A673 (cell line): ENCODE measurements at regions of chr11 and their contacts with region 1.

Region 1: DNA sequence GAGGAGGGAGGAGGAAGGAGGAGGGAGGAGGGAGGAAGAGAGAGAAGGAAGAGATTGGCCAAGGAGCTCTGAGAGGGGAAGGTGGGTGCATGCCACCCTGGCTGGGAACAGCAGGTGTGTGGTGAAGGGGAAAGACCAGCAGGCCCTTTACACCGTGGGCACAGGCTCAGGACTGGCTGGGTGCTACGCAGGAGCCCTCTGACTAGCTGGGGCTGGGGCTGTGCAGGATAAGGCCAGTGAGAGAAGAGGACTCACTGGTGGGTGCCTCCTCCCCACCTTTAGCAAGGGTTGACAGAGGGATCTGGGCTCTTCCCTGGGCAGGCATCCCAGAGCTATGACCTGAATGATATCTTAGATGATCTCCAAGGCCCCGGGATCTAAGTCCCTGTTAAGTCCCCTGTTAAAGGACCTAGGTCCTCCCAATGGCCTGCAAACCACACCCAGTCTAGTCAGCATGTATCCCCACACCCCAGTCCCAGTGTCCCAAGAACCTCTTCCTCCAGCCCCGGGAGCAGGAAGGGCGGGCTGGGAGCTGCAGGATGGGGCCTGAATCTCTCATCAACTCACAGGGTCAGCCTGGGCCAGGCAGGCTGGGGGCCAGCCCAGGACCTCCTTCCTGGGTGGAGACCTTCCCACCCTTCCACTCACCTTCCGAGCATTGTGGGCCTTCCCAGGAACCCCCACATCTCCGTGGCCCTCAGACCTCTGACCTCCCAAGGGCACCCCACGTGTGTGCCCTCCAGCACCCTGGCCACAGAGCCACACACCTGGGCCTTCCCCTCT is 55.4 kb downstream of the CDKN1C start:
- DNase-seq: no peak
- H3K4me3 ChIP-seq: no peak overlapping the region
- H3K27ac ChIP-seq: no peak overlapping the region
- H3K4me1 ChIP-seq: no peaks in the 10 kb centered on the region
- H3K27me3 ChIP-seq: no peaks in the 10 kb centered on the region
- CTCF ChIP-seq: no peak

Region 2: GRCh38 chr11:3231855-3232744 is 401.9 kb after region 1 on chr11 and contains the start of gene MRGPRE:
- CTCF ChIA-PET with region 1: no interaction called
- POLR2A ChIA-PET with region 1: interaction called, 17 read pairs
- intact Hi-C with region 1: no loop called
- DNase-seq: no peak
- H3K4me3 ChIP-seq: no peak within 1 kb of the TSS
- H3K27ac ChIP-seq: no peak within 1 kb of the TSS
- H3K4me1 ChIP-seq: no peaks in the 10 kb centered on the region
- H3K27me3 ChIP-seq: no peaks in the 10 kb centered on the region
- CTCF ChIP-seq: no peak
- total RNA-seq, gene MRGPRE: not detected in 2 replicates